AG04449 (cell line): ENCODE measurements at regions of chr14 and their contacts with region 1.

Region 1: DNA sequence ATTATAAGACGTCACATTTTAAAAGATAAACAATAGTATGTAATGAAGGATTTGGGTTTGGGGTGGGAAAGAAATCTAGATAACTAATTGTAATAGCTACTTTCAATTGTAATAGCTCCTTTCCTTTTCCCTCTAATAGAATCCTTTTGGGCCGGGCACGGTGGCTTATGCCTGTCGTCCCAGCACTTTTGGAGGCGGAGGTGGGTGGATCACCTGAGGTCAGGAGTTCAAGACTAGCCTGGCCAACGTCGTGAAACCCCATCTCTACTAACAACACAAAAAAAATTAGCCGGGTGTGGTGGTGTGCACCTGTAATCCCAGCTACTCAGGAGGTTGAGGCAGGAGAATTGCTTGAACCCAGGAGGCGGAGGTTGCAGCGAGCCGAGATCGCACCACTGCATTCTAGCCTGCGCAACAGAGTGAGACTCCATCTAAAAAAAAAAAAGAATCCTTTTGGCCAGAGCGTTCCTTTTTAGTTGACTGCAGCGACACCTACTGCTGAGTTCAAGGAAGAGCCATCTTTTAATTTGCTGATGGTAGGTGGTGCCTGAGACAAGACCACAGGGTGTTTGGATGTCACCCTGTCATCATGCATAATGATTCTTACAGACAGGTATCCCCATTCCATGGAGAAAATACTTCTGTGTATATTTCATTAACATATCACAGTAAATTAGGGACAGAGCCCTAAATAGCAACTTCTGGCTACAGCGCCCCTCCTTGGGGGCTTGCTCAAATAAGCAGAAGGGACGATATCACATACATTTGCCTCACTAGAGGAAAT is 79.5 kb downstream of the ARMH4 start:
- DNase-seq: no peak
- H3K4me3 ChIP-seq: no peak overlapping the region
- CTCF ChIP-seq: peak; percentile 62

Region 2: DNA sequence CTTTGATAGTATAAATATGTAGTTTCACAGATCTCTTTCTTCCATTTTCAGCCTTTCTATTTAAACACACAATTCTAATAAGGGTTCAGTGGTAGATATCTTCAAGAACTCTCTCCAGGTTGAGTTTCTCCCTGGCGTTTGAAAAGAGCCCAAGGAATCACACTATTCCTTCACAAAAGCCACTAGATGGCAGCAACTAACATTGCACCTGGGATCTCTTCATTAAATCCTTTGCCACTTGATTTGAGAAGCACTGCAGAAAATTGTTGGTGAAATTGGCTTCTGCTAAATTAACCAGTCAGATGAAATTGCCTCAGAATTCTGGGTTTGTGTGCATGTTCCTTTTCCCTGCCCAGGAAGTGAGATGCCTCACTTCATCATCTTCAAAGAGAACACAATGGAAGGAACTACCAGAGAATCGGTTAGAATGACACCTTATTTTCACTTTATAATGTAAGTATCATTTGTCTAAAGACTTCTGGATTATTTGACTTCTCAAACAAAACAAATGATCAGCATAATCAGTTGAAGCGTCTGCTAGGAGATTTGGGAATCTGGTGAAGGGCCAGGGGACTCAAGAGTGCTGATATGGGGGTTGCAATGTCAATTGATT is 585.6 kb before region 1 on chr14:
- CTCF ChIA-PET with region 1: interaction called, 22 read pairs
- POLR2A ChIA-PET with region 1: no interaction called
- DNase-seq: no peak
- H3K4me3 ChIP-seq: no peak overlapping the region
- CTCF ChIP-seq: peak; percentile 55

Region 3: DNA sequence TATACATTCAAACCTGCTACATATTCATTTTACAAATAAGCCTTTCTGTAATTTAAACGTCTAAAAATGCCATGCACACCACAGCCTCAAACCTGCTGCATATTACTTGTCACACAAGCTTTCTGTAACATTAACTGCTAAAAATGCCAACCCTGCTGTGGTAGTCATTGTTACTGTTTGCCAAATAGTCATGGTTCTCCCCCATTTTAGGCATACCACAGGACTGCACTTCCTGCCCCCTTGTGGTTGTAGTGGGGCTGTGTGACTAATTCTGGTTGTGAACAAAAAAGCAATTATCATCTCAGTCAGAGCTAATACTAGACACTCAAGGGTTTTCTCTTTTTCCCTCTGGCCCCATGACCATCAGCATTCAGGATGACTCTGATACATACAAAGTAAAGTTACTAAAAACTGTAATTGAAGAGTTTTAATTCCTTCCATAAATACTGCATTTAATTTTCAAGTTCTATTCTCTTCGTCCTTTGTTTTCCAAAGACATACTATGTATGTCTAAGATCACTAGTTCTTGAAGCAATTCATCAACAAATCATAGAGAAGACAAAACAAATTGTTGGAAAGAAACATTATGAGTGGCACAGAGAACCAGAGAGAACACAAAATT is 200.9 kb before region 1 on chr14:
- CTCF ChIA-PET with region 1: interaction called, 14 read pairs
- POLR2A ChIA-PET with region 1: no interaction called
- DNase-seq: no peak
- H3K4me3 ChIP-seq: no peak overlapping the region
- CTCF ChIP-seq: peak; percentile 79

Region 4: DNA sequence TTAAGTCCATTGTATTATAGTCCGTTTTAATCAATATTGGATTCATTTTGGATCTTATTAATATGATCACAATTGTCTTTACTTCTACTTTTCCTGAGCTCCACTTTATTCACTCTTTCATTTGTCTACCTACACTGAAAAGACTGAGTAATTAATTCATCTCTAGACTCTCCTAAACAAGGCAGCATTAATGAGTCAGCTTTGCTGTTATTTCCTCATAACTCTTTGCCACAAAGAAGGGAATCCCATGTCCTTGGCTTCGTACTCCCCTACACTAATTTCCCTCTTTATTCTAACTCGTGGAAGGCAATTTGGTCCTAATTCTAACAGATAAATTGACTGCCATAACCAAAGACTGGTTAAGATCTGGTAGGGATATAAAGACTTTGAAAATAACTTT is 12.4 kb before region 1 on chr14:
- CTCF ChIA-PET with region 1: interaction called, 30 read pairs
- POLR2A ChIA-PET with region 1: no interaction called
- DNase-seq: no peak
- H3K4me3 ChIP-seq: no peak overlapping the region
- CTCF ChIP-seq: no peak